ENCODE measurements at regions of chr1 and their contacts with region 1.

Region 1: DNA sequence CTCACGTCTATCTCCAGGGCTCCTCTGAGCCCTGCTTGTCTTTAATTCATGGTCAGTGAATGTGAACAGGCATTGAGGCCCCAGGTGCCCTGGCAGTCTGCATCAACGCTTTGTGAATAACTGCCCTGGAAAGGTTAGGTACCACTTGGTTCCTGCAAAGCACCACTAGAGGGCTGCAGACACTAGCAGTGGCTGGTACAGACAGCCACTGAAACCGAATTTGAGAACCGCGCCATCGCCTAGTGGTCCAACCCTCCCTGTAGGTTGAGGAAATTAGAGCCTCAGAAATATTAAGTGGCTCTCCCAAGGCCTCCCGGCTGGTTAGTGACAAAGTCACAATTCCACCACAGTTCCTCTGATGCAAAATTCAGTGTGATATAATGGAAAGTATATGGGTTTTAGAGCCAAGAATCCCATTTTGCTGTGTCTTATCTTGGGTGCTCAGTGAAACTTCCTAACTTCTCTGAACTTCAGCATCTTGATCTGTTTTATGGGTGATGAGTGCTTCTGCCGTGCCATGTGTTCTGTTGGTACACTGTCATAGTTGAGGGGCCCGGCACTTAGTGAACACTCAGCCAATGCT is 46.2 kb upstream of the BCL9 start:
- DNase-seq: peak; percentile 88
- H3K4me3 ChIP-seq: no peak overlapping the region
- H3K27ac ChIP-seq: no peak overlapping the region
- H3K4me1 ChIP-seq: peaks cover 0 to 6% (median 5%) of the 10 kb centered on the region in 4 donors
- H3K27me3 ChIP-seq: no peaks in the 10 kb centered on the region
- CTCF ChIP-seq: peak; percentile 86 to 92 (median 90)
- EP300 ChIP-seq: no peak
- POLR2A ChIP-seq: no peak

Region 2: GRCh38 chr1:147541672-147542568 is 46.8 kb after region 1 on chr1:
- intact Hi-C with region 1: loop called (anchors 2 kb)
- DNase-seq: peak; percentile 85
- H3K4me3 ChIP-seq: peak overlapping the region; percentile 55 to 68 (median 62)
- H3K27ac ChIP-seq: peak overlapping the region; percentile 94 to 97 (median 95)
- H3K4me1 ChIP-seq: peaks cover 0 to 62% (median 44%) of the 10 kb centered on the region in 4 donors
- H3K27me3 ChIP-seq: no peaks in the 10 kb centered on the region
- CTCF ChIP-seq: no peak
- EP300 ChIP-seq: no peak
- POLR2A ChIP-seq: peak in 1 of 2 donors; percentile 15

Region 3: GRCh38 chr1:147627435-147628110 is 132.5 kb after region 1 on chr1:
- intact Hi-C with region 1: loop called (anchors 1 kb)
- DNase-seq: no peak
- H3K4me3 ChIP-seq: no peak overlapping the region
- H3K27ac ChIP-seq: no peak overlapping the region
- H3K4me1 ChIP-seq: no peaks in the 10 kb centered on the region
- H3K27me3 ChIP-seq: no peaks in the 10 kb centered on the region
- CTCF ChIP-seq: peak; percentile 60 to 91 (median 81)
- EP300 ChIP-seq: no peak
- POLR2A ChIP-seq: no peak

Region 4: GRCh38 chr1:147640553-147641165 is 145.6 kb after region 1 on chr1:
- intact Hi-C with region 1: loop called (anchors 1 kb)
- DNase-seq: no peak
- H3K4me3 ChIP-seq: no peak overlapping the region
- H3K27ac ChIP-seq: no peak overlapping the region
- H3K4me1 ChIP-seq: peaks cover 0 to 15% (median 9%) of the 10 kb centered on the region in 4 donors
- H3K27me3 ChIP-seq: no peaks in the 10 kb centered on the region
- CTCF ChIP-seq: peak; percentile 33 to 84 (median 56)
- EP300 ChIP-seq: no peak
- POLR2A ChIP-seq: no peak

Region 5: DNA sequence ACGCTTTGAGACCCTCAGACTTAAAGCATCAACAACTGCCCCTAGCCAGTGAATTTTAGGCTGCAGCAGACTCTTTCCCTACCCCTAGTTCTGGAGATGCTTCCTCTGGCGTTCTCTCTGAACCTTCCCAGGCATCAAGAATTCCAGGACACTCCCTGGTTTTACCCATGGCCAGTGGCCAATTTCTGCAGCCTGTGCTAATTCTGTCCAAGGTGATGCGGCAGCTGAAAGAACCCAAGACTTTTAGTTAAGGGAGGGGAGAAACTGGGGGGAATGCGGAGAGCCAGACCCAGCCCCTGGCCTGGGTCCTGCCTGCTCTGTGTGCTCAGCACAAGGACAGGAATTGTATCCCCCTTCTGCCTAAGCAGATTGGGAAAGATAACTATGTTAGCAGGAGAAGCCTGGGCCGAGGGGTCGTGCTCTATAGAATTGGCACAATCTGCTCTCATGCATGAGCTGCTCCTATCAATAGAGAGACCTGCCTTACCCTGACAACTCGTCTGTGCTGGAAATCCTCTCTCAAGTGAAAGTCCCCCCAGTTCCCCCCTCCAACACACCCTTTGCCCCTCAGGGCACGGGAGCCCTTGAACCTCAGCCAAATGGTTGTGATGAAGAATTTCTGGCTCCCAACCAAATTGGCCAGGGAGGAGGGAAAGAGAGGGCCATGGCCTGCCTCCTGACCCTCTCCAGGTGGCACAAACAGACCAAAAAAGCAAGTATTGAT is 402.1 kb after region 1 on chr1:
- intact Hi-C with region 1: loop called (anchors 5 kb)
- DNase-seq: no peak
- H3K4me3 ChIP-seq: no peak overlapping the region
- H3K27ac ChIP-seq: no peak overlapping the region
- H3K4me1 ChIP-seq: no peaks in the 10 kb centered on the region
- H3K27me3 ChIP-seq: no peaks in the 10 kb centered on the region
- CTCF ChIP-seq: no peak
- EP300 ChIP-seq: no peak
- POLR2A ChIP-seq: no peak

Region 6: DNA sequence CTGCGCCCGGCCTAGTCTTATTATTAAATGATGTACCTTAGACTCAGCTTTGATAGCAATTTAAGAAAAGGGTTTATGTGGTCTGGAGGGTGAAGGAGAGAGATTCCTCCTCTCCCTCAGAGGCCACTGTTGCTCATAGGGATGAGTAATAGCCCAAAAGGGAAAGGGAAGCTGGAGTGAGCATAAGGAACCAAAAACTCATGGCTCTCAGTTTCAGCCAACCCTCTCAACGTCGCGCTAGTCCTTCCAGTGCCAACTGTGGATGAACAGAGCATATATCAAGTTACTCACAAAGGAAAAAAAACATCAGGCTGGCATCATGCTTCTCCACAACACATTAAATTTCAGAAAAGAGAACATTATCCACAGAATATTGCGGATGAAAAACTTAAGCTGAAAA is 424.8 kb after region 1 on chr1:
- intact Hi-C with region 1: no loop called
- DNase-seq: no peak
- H3K4me3 ChIP-seq: no peak overlapping the region
- H3K27ac ChIP-seq: no peak overlapping the region
- H3K4me1 ChIP-seq: no peaks in the 10 kb centered on the region
- H3K27me3 ChIP-seq: no peaks in the 10 kb centered on the region
- CTCF ChIP-seq: no peak
- EP300 ChIP-seq: no peak
- POLR2A ChIP-seq: no peak

Measured in sigmoid colon (tissue), 7 donors.